Ascending aorta (tissue), 2 donors: ENCODE measurements at regions of chr19 and their contacts with region 1.

Region 1: GRCh38 chr19:58380722-58381466 is at the start of gene ZNF837:
- DNase-seq: peak; percentile 99
- H3K4me3 ChIP-seq: peak within 1 kb of the TSS; percentile 82 to 86
- H3K27ac ChIP-seq: peak within 1 kb of the TSS; percentile 84 to 91
- H3K4me1 ChIP-seq: peaks cover 8 to 24% of the 10 kb centered on the region in 2 donors
- H3K27me3 ChIP-seq: no peaks in the 10 kb centered on the region
- CTCF ChIP-seq: no peak
- total RNA-seq, gene ZNF837: not detected

Region 2: GRCh38 chr19:58117841-58118575 is 262.9 kb before region 1 on chr19:
- intact Hi-C with region 1: no loop called
- DNase-seq: no peak
- H3K4me3 ChIP-seq: no peak overlapping the region
- H3K27ac ChIP-seq: no peak overlapping the region
- H3K4me1 ChIP-seq: no peaks in the 10 kb centered on the region
- H3K27me3 ChIP-seq: no peaks in the 10 kb centered on the region
- CTCF ChIP-seq: no peak

Region 3: DNA sequence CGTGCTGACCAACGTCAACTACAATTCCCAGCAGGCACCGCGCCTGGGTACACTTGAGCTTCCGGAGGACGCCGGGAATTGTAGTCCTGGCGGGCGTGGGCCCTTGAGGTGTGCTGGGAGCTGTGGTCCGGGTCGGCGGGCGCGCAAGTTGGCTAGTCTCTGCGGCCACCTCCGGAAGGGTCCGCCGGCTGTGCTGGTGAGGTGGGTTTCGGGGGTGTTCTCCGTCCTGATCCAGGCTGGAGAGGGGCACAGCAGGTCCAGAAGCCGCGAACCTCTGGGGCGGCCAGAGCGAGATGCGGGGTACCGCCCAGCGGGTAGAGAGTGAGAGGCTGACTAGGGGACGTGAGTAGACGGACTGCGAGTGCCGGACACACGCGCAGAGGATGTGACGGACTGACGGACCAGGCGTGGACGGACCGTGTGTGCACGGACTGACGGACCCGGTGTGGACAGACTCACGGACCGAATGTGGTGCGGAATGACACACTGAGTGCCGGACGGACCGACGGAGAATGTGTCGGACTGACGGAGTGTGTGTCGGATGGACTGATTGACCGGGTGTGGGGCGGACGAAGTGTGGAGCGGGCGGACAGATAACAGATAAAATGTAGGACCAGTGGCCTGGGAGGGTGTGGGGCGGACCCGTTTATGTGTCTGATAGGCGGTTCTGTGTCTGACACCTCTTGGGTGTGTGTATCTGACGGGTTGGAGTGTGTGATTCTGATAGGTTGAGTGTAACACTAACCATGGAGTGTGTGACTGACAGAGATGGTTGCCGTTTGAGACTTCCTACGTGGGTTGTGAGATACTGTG is 53.8 kb before region 1 on chr19 and contains the start of gene ZSCAN22:
- intact Hi-C with region 1: loop called (anchors 1 kb)
- DNase-seq: peak; percentile 78 to 98
- H3K4me3 ChIP-seq: peak within 1 kb of the TSS; percentile 91 to 92
- H3K27ac ChIP-seq: peak within 1 kb of the TSS; percentile 91 to 96
- H3K4me1 ChIP-seq: peaks cover 4 to 13% of the 10 kb centered on the region in 2 donors
- H3K27me3 ChIP-seq: no peaks in the 10 kb centered on the region
- CTCF ChIP-seq: no peak
- total RNA-seq, gene ZSCAN22: 1.9 TPM

Region 4: DNA sequence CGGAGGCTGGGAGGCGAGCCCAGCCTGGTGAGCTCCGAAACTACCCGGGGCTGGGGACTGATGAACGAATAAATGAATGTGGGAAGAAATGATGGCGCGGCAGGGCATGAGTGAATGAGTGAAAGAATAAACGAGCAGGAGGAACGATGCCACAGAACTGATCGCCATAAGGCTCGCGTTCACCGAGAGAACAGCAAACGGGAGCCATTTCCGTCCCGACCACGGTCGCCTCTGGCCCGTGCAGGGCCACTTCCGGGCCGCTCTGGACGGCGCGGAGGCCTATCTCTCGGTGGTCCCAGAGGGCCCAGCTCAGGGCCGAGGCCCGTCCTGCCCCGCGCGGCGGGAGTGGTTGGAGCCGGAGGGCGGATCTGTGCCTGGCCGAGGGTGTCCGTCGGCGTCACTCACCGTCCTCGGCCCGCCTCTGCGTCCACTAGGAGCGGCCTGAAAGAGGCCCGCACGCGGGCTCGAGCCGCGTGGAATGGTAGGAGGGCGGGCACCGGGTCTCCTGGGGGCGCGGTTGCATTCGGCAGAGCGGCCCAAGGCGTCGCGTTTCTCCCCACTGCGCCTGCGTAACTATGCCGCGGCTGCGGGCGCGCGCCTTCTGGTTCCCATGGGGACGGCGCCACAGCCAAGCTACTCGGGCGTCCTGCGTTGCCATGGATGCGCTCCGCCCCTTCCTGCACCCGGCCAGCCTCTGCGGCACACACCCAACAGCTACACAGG is 18.5 kb before region 1 on chr19 and contains the start of gene ZNF497:
- intact Hi-C with region 1: loop called (anchors 1 kb)
- DNase-seq: peak; percentile 78 to 97
- H3K4me3 ChIP-seq: peak within 1 kb of the TSS; percentile 67 to 74
- H3K27ac ChIP-seq: peak within 1 kb of the TSS; percentile 86 to 94
- H3K4me1 ChIP-seq: peaks cover 0 to 7% of the 10 kb centered on the region in 2 donors
- H3K27me3 ChIP-seq: no peaks in the 10 kb centered on the region
- CTCF ChIP-seq: no peak
- total RNA-seq, gene ZNF497: not detected

Region 5: GRCh38 chr19:58400916-58401839 is 20.3 kb after region 1 on chr19:
- intact Hi-C with region 1: loop called (anchors 1 kb)
- DNase-seq: peak; percentile 99
- H3K4me3 ChIP-seq: peak overlapping the region; percentile 66 to 67
- H3K27ac ChIP-seq: no peak overlapping the region
- H3K4me1 ChIP-seq: peaks cover 7 to 10% of the 10 kb centered on the region in 2 donors
- H3K27me3 ChIP-seq: no peaks in the 10 kb centered on the region
- CTCF ChIP-seq: peak in 1 of 3 experiments; percentile 30